K562 (cell line): ENCODE measurements at regions of chr16 and their contacts with region 1.

Region 1: GRCh38 chr16:21554795-21555585 is 44.4 kb upstream of the METTL9 start:
- DNase-seq: peak; percentile 89 to 93 (median 92)
- ATAC-seq: peak; percentile 91
- H3K4me3 ChIP-seq: no peak overlapping the region
- H3K27ac ChIP-seq: 0 out of 3 replicates have a peak overlapping the region, but pooled peaks have one; percentile 16
- H3K4me1 ChIP-seq: peaks cover 0 to 26% of the 10 kb centered on the region in 2 experiments; a peak in 4 of 5 replicates
- H3K27me3 ChIP-seq: peaks cover 3 to 14% of the 10 kb centered on the region in 2 experiments; a peak in 1 of 5 replicates
- CTCF ChIP-seq: peak; percentile 97 to 98 (median 98)
- EP300 ChIP-seq: no peak
- POLR2A ChIP-seq: no peak
- RAD21 ChIP-seq: peak; percentile 99 to 100

Region 2: DNA sequence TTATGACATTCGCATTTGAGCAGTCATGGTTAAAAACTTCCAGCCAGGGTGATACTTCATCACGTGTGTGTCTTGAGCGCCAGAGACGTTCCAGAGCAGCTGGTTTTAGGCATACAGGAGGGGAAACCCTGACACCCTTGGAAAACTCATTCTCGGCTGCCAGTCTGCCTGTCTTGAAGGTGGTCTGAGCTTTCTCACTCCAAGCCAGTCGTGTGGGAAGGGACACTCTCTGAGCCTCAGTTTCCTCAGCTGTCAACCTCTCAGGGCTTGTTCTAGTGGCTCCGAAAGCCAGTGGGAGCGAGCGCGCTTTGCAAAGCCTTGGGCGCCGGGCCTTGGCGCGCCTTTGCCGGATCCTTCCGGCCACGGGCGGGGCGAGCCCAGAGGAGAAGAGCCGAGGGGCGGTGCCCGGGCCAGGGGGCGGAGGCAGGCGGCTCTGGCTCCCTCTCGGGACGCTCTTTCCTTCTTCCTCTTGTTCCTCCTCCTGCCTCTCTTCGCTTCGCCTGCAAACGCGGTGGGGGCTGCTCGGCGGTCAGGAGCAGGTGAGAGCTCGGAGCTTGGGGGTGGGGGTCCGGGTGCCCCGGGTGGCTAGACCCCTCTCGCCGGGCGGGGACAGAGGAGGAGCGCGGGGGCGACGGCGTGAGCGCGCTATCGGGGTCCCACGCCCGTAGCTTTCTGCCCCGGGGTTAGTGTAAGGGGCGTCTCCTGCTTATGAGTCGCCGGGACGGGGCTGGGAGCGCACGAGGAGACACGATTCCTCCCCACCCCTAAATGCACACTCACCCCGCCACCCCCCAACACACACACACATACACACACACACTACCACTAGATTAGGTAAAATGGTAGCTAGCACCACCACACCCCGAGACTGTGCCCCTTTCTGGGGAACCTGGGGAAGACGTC is 396.5 kb before region 1 on chr16 and contains the start of gene LDAF1:
- CTCF ChIA-PET with region 1: no interaction called
- POLR2A ChIA-PET with region 1: no interaction called
- in situ Hi-C with region 1: loop called (anchors 5 kb)
- intact Hi-C with region 1: loop called (anchors 10 kb)
- DNase-seq: peak; percentile 90 to 92 (median 92)
- ATAC-seq: peak; percentile 99
- H3K4me3 ChIP-seq: peak within 1 kb of the TSS; percentile 70
- H3K27ac ChIP-seq: peak within 1 kb of the TSS; percentile 58; the same call in 2 of the 3 replicates
- H3K4me1 ChIP-seq: peaks cover 10 to 17% of the 10 kb centered on the region in 2 experiments
- H3K27me3 ChIP-seq: no peaks in the 10 kb centered on the region
- CTCF ChIP-seq: no peak; a peak in 1 of 6 replicates
- EP300 ChIP-seq: no peak
- POLR2A ChIP-seq: peak; percentile 77
- RAD21 ChIP-seq: no peak
- polyA plus RNA-seq, gene LDAF1: 13.7 to 20.1 TPM